ENCODE measurements at regions of chr3 and their contacts with region 1.

Region 1: GRCh38 chr3:45280232-45280631 is 54.1 kb upstream of the TMEM158 start:
- DNase-seq: peak; percentile 16
- H3K4me3 ChIP-seq: no peak overlapping the region
- H3K27ac ChIP-seq: no peak overlapping the region
- H3K4me1 ChIP-seq: no peaks in the 10 kb centered on the region
- H3K27me3 ChIP-seq: no peaks in the 10 kb centered on the region
- CTCF ChIP-seq: no peak

Region 2: DNA sequence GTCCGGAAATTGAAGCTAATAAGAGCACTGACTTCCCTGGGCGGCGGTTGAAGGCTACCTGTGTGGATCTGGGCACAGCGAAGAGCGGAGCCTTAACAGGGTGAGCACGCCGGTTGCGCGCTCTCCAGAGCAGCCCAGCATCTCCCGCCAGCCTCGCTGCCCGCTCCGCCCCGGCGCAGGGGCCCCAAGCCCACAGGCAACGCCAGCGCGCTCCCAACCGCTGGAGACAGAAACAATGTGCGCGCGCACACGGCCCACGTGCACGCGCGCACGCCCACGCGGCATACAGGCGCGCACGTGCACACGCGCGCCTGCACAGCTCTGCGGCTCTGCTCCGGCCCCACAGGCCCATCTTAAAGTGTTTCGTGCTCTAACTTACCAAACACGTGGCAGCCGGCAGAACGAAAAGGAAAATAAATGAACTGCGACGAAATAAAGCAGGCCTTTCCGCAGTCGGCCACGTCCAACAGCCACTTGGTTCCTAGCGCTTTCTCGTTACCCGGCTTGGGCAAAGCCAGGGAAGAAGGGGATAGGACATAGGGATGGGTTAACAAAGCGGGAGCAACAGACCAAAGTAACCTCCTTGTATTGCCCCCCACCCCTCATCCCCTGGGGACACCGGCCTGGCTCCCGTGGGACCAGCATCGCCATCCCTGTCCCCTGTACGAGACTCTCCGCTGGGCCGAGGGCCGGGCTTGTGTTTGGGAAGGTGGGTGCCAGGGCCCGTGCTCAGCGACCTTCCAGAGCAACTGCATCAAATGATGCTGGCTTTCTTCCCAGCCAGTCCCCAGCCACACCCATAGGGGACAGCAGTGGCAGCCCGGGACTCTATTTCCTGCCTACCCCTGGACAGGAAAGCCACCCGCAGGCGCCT is 1385.8 kb before region 1 on chr3:
- CTCF ChIA-PET with region 1: no interaction called
- dilution Hi-C with region 1: no loop called
- in situ Hi-C with region 1: no loop called
- intact Hi-C with region 1: no loop called
- DNase-seq: peak; percentile 27
- H3K4me3 ChIP-seq: peak overlapping the region; percentile 17 to 47 (median 28)
- H3K27ac ChIP-seq: no peak overlapping the region
- H3K4me1 ChIP-seq: peaks cover 11% of the 10 kb centered on the region
- H3K27me3 ChIP-seq: no peaks in the 10 kb centered on the region
- CTCF ChIP-seq: no peak

Region 3: DNA sequence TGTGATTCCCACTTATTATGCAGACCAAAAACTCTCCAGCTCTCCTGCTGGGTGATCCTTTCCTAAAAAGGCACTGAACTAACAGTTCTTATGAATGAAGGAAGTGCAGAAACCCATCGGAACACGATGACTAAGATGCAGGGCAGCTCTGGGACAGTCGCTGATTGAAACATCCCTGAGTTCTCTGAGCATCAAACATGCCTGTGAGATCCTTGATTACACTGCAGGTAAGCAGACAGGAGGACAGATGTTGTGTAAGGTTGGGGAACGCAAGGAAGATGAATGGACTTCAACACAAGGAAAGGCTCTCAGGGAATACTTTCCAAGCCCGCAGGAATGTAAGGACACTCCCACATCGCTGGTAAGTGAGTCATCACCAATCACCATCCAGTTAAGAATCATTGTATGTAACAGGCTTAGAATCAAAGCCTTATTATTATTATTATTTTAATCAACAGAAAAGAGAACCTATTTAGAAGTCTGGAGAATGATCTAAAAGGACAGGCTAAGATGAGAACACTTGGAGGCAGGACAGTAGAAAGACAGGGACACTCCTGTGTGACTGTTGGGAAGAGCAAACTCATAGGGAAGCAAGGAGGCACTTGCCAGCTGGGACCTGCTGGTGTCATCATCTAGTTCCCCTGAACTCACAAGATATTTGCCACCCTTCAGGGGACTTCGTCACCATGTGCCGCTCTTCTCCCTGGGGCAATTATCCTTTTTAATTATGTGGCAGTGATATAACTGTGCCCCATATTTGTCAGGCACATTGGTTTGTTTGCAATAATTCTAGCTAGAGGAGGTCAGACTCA is 80.2 kb before region 1 on chr3:
- CTCF ChIA-PET with region 1: no interaction called
- dilution Hi-C with region 1: no loop called
- in situ Hi-C with region 1: no loop called
- intact Hi-C with region 1: no loop called
- DNase-seq: peak; percentile 99
- H3K4me3 ChIP-seq: no peak overlapping the region
- H3K27ac ChIP-seq: peak overlapping the region; percentile 90
- H3K4me1 ChIP-seq: peaks cover 40% of the 10 kb centered on the region
- H3K27me3 ChIP-seq: no peaks in the 10 kb centered on the region
- CTCF ChIP-seq: no peak

Region 4: GRCh38 chr3:45321607-45322391 is 41.6 kb after region 1 on chr3:
- CTCF ChIA-PET with region 1: no interaction called
- dilution Hi-C with region 1: loop called (anchors 5 kb)
- in situ Hi-C with region 1: no loop called
- intact Hi-C with region 1: loop called (anchors 5 kb)
- DNase-seq: peak; percentile 54
- H3K4me3 ChIP-seq: no peak overlapping the region
- H3K27ac ChIP-seq: no peak overlapping the region
- H3K4me1 ChIP-seq: no peaks in the 10 kb centered on the region
- H3K27me3 ChIP-seq: no peaks in the 10 kb centered on the region
- CTCF ChIP-seq: no peak

Measured in mammary epithelial cell (primary cell).